ENCODE measurements at regions of chr5 and their contacts with region 1.

Region 1: DNA sequence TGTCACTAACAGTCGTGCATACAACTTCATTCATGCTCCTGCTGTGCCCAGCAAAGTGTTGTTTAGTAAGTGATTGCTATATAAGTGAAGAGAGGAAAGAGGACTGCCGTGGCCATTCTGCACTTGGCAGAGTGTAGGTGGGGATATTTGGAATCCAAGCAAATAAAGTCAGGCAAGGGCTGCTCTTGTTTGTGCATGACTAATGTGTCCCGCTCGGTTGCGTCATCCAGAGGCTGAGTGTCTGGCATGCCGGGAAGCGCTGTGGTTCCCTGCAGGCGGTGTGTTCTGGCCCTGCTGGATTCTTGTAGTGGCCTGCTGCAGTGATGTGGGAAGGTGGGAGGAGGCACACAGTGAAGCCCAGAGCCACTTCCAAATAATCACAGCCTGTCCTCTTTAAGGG is 136.9 kb upstream of the ANKH start:
- DNase-seq: peak in 3 of 5 donors; percentile 13 to 95 (median 32)
- H3K4me3 ChIP-seq: no peak overlapping the region
- H3K27ac ChIP-seq: no peak overlapping the region
- H3K4me1 ChIP-seq: peaks cover 0 to 4% (median 0%) of the 10 kb centered on the region in 3 donors
- H3K27me3 ChIP-seq: no peaks in the 10 kb centered on the region
- CTCF ChIP-seq: peak; percentile 2

Region 2: GRCh38 chr5:14727428-14727865 is 281.0 kb before region 1 on chr5:
- intact Hi-C with region 1: loop called (anchors 5 kb)
- DNase-seq: peak; percentile 85 to 92 (median 89)
- H3K4me3 ChIP-seq: no peak overlapping the region
- H3K27ac ChIP-seq: no peak overlapping the region
- H3K4me1 ChIP-seq: peaks cover 0 to 6% (median 2%) of the 10 kb centered on the region in 3 donors
- H3K27me3 ChIP-seq: no peaks in the 10 kb centered on the region
- CTCF ChIP-seq: peak; percentile 92